Uterus (tissue), 4 donors: ENCODE measurements at regions of chr14 and their contacts with region 1.

Region 1: DNA sequence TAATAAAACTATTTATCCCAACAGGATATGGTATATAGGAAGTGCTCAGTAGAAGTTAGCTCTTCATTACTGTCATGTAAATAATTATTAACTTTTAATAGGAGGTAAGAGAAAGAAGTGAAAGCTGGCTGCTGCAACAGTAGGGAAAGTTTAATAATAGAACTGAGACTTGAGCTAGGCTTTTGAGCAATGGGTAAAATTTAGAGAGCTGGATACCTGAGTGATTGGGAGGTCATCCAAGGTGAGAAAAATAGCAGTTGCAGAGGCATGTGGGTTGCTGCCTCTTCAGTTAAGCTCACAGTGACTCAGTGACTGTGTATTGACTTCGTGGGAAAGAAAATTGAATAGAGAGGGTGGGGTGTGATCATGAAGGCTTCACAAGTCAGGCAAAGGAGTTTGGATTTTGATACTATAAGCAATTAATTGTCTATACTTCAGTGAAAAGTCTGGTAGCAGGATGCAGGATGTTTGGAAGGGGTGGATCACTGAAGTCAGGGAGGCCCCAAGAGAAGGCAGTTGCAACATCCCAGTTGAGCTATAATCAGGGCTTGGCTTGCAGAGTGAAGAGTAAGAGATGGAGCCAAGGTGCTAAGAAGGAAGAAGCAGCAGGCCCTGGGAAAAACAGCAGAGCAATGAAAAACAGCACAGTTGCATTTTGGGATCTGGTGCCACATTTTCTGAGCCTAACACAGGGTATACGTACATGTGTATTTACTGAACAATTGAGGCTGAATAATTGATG is 172.0 kb upstream of the FRMD6 start:
- DNase-seq: peak; percentile 60 to 62
- H3K4me3 ChIP-seq: no peak overlapping the region
- H3K27ac ChIP-seq: peak overlapping the region in 1 of 2 donors; percentile 8
- H3K4me1 ChIP-seq: peaks cover 0 to 2% of the 10 kb centered on the region in 2 donors
- H3K27me3 ChIP-seq: no peaks in the 10 kb centered on the region
- CTCF ChIP-seq: no peak
- POLR2A ChIP-seq: no peak

Region 2: DNA sequence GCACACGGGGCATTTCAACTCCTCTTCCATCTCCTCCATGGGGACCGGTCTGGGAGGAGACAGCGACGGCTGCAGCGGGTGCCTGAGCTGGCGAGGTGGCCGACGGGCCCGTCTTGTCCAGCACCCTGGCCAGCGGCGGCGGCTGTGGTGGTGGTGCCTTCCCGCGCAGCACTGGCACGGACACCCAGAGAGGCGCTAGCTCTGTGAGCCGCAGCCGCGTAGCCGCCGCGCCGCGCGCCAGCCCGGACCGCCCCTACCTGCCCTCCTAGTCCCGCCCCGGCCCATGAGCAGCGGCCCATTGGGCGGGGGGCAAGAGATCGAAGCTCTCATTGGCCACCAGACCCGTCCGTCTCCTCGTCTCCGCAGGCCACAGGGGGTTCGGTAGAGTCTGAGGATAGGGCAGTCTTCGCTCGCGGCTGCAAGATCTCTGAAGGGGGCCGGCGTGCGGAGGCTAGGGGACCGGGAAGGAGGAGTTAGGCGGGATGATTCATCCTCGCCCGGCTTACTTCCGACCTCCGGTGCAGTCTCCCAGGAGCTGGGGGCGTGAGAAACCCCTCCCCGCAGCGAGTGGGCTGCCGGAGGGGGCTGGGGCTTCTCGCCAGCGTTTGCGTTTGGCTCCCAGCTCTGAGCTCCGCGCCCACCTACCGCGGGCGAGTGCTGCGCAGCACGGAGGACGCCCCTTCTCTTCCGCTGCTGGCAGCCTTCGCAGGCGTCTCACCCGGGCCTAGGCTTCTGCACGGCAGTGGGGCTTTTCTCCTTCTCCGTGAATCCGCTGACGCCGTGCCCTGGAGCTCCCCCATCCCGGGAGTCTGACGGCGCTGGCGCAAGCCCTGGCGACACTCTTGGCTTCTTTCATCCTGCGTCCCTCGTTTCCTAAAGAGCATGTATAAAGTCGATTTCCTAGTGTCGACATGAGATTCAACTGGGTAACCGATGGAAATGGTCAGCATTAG is 384.6 kb before region 1 on chr14 and contains the start of gene TRIM9:
- intact Hi-C with region 1: no loop called
- DNase-seq: peak; percentile 96 to 98
- H3K4me3 ChIP-seq: peak within 1 kb of the TSS; percentile 59 to 73
- H3K27ac ChIP-seq: peak within 1 kb of the TSS; percentile 90 to 94
- H3K4me1 ChIP-seq: peaks cover 0 to 19% of the 10 kb centered on the region in 2 donors
- H3K27me3 ChIP-seq: no peaks in the 10 kb centered on the region
- CTCF ChIP-seq: no peak
- POLR2A ChIP-seq: peak; percentile 65 to 67
- total RNA-seq, gene TRIM9: 2.4 to 7.6 (median 3.4) TPM

Region 3: GRCh38 chr14:51651388-51652167 is 171.8 kb after region 1 on chr14 and contains the start of gene FRMD6:
- intact Hi-C with region 1: loop called (anchors 10 kb)
- DNase-seq: peak; percentile 86 to 89
- H3K4me3 ChIP-seq: peak within 1 kb of the TSS; percentile 86 to 92
- H3K27ac ChIP-seq: peak within 1 kb of the TSS; percentile 95 to 99
- H3K4me1 ChIP-seq: no peaks in the 10 kb centered on the region
- H3K27me3 ChIP-seq: no peaks in the 10 kb centered on the region
- CTCF ChIP-seq: peak; percentile 46 to 89 (median 74)
- POLR2A ChIP-seq: peak; percentile 61 to 79
- total RNA-seq, gene FRMD6: 97.4 to 199 (median 134) TPM

Region 4: GRCh38 chr14:52043690-52044089 is 563.9 kb after region 1 on chr14:
- intact Hi-C with region 1: no loop called
- DNase-seq: no peak
- H3K4me3 ChIP-seq: no peak overlapping the region
- H3K27ac ChIP-seq: no peak overlapping the region
- H3K4me1 ChIP-seq: peaks cover 0 to 7% of the 10 kb centered on the region in 2 donors
- H3K27me3 ChIP-seq: no peaks in the 10 kb centered on the region
- CTCF ChIP-seq: peak in 3 of 4 experiments; percentile 24 to 44 (median 26)
- POLR2A ChIP-seq: no peak